ENCODE measurements at regions of chr15 and their contacts with region 1.

Region 1: DNA sequence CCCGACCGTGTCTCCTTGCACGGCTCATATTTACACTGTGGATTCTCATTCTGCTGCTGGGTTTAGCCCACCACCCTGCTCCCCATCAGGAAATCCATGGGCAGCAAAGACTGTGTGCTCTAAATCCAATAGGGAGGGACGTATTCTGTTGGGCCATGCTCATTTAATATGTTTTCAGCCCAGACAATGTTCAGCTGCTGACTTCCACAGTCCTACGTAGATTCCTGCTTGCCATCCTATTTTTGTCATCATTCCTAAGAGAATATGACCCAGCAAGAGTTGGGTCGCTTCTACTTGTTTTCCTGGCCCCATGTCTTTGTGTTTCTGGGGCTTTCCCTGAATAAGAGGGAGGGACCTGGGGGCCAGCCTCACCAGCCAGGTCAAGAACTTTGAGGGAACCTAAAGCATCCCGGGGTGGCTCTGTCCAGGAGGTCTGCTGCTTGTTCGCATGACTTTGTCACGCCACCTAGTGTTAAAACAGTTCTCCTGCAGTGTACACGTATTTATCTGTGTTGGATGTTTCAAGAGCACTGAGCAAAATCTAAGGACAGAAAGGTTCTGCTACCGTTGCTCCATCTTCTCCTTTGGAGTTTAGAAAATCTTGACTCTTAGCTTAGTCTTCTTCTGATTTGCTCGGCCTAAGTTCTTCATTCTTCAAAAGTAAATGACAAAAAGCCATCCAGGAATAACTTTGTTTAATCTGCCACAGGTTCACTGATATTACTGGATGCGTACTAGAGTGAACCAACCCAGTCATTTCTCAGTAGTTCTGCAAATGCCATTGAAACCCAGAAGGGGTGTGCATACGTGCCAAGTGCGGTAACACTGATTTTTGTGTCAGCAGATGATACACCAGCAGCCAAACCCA is 79.8 kb upstream of the NR2E3 start:
- DNase-seq: no peak
- ATAC-seq: peak; percentile 84
- H3K4me3 ChIP-seq: no peak overlapping the region
- H3K27ac ChIP-seq: no peak overlapping the region
- H3K4me1 ChIP-seq: peaks cover 0 to 10% of the 10 kb centered on the region in 2 donors
- H3K27me3 ChIP-seq: no peaks in the 10 kb centered on the region

Region 2: DNA sequence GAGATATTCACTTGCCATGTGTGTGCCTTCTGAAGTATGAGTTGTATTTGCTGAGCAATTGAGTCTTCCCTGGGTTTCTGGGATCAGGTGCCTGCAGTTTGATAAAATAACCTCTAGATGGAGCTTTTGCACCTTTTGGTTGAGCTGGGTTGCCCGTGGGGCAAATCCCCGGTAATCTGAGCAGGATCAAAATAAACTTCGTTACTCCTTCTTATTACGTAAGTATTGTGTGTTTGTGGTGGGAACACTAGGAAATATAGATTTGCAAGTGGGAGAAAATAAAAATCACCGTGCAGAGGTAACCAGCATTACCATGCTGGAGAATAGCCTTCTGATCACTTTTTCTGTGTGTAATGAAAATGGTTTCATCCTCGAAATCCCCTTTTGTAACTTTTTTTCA is 197.5 kb before region 1 on chr15:
- intact Hi-C with region 1: loop called (anchors 10 kb)
- DNase-seq: no peak
- ATAC-seq: no peak
- H3K4me3 ChIP-seq: no peak overlapping the region
- H3K27ac ChIP-seq: no peak overlapping the region
- H3K4me1 ChIP-seq: no peaks in the 10 kb centered on the region
- H3K27me3 ChIP-seq: no peaks in the 10 kb centered on the region

Region 3: DNA sequence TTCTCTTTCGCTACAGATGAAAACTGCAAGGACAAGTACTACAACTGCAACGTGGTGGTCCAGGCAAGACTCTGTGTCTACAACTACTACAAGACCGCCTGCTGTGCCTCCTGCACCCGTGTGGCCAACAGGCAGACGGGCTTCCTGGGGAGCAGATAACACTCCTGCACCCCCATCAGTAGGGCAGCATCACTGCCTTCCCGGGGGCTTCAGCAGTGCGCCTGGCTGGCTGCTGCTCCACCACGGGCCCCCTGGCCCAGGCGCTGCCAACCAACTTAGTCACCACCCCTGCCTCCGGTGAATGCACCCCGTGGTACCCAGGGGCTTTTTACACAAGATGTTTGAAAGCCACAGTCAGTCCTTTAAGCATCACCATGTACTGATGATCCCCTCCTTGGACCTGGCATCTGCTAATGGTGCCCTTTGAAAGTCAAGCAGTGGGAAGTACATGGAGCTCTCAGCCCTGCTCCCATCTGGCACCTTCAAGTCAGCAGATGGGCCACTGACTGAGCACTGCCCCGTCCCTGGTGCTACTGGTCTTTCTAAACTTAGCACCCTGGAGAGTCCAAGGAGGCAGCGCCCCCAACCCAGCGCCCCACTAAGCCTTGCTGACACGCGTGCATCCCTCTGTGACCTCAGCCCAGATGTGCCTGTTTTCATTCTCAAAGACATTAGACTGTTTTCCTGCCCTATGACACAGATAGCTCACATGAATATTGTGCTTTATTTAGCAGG is 46.9 kb after region 1 on chr15:
- intact Hi-C with region 1: no loop called
- DNase-seq: no peak
- ATAC-seq: no peak
- H3K4me3 ChIP-seq: no peak overlapping the region
- H3K27ac ChIP-seq: peak overlapping the region in 1 of 2 donors; percentile 6
- H3K4me1 ChIP-seq: no peaks in the 10 kb centered on the region
- H3K27me3 ChIP-seq: no peaks in the 10 kb centered on the region

Measured in aorta (tissue), 5 donors.